SK-N-SH (cell line): ENCODE measurements at regions of chr20 and their contacts with region 1.

Region 1: DNA sequence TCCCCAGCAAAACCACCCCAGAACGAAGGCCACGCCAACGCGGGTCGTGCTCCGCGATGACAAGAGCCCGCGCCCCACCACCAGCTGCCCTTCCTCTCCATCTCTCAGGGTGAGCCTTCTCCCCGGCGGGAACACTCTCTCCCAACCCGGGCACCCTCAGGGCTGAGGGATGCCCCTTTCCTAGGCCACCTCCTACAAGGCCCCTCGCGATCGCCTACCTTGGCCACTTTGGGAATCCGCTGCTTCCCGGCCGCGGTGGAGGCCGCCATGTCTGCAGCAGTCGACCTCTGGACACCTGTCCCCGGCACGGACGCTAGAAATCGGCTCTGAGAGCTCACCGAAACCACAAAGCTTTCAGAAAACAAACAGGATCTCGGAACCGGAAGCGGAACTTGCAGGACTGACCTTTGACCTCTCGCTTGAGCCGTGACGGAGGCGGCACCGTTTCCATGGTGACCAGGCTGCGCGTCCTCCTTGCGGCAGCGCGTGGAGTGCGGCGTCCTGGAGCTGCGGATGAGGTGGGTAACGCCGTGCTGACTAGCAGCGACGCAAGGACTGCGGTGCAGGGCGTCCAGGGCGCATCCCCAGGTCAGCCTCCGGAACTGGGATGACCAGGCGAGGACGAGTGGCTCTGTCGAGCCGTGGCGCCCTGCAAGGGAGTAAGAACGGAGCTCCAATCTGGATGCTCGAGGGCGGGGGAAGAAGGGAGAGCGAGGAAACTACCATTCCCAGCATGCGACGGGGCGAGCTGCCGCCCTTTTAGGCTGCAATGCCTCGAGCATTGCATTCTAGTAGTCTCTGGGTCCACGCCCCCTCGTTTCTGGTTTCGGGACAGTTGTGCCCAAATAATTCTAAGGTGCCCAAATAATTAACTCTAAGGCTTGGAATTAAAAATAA is at the starts of genes CFAP61 and CRNKL1:
- DNase-seq: peak; percentile 93
- H3K4me3 ChIP-seq: peak within 1 kb of the TSS; percentile 90 to 100
- H3K27ac ChIP-seq: peak within 1 kb of the TSS; percentile 84 to 88
- H3K4me1 ChIP-seq: peaks cover 3% of the 10 kb centered on the region in 2 experiments; a peak in 2 of 4 replicates
- H3K27me3 ChIP-seq: no peaks in the 10 kb centered on the region
- CTCF ChIP-seq: no peak
- EP300 ChIP-seq: no peak
- RAD21 ChIP-seq: no peak
- polyA plus RNA-seq, gene CFAP61: 0.26 and 0.62 TPM in 2 replicates
- polyA plus RNA-seq, gene CRNKL1: 7.6 and 8.9 TPM in 2 replicates

Region 2: DNA sequence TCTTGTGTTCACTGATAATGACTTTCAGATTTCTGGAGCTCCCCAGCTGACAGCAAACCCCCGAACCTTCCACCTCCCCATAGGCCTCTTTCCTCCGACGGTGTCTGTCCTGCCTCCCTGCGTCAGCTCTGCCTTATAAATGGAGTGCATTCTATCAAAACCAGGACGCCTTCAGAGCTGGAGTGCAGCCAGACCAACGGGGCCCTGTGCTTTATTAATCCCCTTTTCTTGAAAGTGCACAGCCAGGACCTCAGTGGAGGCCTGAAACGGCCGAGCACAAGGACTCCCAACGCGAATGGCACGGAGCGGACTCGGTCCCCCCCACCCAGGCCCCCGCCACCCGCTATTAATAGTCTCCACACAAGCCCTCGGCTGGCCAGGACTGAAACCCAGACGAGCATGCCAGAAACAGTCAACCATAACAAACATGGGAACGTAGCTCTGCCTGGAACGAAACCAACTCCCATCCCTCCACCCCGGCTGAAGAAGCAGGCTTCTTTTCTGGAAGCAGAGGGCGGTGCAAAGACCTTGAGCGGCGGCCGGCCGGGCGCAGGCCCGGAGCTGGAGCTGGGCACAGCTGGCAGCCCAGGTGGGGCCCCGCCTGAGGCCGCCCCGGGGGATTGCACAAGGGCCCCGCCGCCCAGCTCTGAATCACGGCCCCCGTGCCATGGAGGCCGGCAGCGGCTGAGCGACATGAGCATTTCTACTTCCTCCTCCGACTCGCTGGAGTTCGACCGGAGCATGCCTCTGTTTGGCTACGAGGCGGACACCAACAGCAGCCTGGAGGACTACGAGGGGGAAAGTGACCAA is 77.5 kb before region 1 on chr20:
- CTCF ChIA-PET with region 1: no interaction called
- POLR2A ChIA-PET with region 1: no interaction called
- DNase-seq: peak; percentile 69
- H3K4me3 ChIP-seq: peak overlapping the region; percentile 23 to 35; a peak in 3 of 4 replicates
- H3K27ac ChIP-seq: peak overlapping the region; percentile 82 to 84
- H3K4me1 ChIP-seq: peaks cover 21 to 31% of the 10 kb centered on the region in 2 experiments; a peak in 3 of 4 replicates
- H3K27me3 ChIP-seq: no peaks in the 10 kb centered on the region
- CTCF ChIP-seq: no peak
- EP300 ChIP-seq: no peak
- RAD21 ChIP-seq: no peak

Region 3: DNA sequence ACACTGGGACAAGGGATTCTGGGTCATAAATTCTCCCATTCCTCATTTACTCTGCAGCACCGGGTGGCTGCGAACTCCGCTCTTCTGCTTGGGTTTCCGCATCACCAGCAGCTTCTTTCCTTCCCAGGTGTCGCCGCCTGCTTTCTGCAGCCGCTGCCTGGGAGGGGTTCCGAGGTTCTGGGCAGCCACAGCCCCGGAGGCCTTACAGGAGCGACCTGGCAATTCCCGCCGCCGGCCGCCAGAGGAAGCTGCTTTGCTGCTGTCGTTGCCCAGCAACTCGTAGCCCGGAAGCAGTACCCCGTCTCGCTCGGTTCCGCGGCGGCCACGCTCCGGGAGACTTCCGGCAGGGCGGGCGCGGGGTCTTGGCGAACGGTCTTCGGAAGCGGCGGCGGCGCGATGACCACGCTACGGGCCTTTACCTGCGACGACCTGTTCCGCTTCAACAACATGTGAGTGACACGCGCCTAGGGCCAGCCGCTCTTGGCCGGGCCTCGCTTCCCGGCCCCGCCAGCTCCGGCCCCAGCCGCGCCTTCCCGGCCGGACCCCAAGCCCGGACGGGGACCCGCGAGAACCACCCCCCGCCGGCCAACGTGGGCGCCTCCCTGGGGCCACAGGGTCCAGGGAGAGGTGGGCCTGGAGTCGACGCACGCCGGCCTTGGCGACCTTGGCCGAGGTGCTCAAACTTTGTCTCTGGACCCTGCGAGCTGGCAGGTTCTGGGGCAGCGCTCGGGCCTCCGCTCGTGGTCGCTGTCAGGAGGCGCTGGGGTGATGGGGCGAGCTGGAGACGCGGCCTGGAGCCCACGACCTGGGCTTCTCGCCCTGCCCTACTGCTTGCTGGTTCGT is 35.1 kb before region 1 on chr20 and contains the start of gene NAA20:
- CTCF ChIA-PET with region 1: interaction called, 9 read pairs
- POLR2A ChIA-PET with region 1: interaction called, 11 read pairs
- DNase-seq: peak; percentile 94
- H3K4me3 ChIP-seq: peak within 1 kb of the TSS; percentile 85 to 93
- H3K27ac ChIP-seq: peak within 1 kb of the TSS; percentile 63 to 71
- H3K4me1 ChIP-seq: peaks cover 6 to 17% of the 10 kb centered on the region in 2 experiments; a peak in 3 of 4 replicates
- H3K27me3 ChIP-seq: no peaks in the 10 kb centered on the region
- CTCF ChIP-seq: peak; percentile 56
- EP300 ChIP-seq: peak in 1 of 2 experiments; percentile 46; a peak in 1 of 4 replicates
- RAD21 ChIP-seq: peak; percentile 34
- polyA plus RNA-seq, gene NAA20: 85.0 and 91.8 TPM in 2 replicates

Region 4: DNA sequence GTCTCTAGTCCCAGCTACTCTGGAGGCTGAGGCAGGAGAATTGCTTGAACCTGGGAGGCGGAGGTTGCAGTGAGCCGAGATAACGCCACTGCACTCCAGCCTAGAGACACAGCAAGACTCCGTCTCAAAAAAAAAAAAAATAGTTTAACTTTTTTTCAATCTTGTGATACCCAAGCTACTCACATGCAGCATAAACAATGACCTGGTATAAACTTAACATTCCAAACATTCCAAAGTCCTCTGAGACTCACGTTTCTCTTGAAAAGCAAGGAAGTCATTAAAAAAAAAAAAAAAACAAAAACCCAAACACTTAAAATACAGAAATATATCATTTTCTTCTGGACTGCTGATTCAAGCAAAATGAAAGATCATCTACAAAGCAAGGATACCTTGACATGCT is 14.4 kb before region 1 on chr20:
- CTCF ChIA-PET with region 1: interaction called, 12 read pairs
- POLR2A ChIA-PET with region 1: interaction called, 10 read pairs
- DNase-seq: no peak
- H3K4me3 ChIP-seq: no peak overlapping the region
- H3K27ac ChIP-seq: peak overlapping the region in 1 of 2 experiments; percentile 38; a peak in 2 of 4 replicates
- H3K4me1 ChIP-seq: peaks cover 0 to 4% of the 10 kb centered on the region in 2 experiments; a peak in 3 of 4 replicates
- H3K27me3 ChIP-seq: no peaks in the 10 kb centered on the region
- CTCF ChIP-seq: no peak
- EP300 ChIP-seq: no peak
- RAD21 ChIP-seq: no peak